HepG2 (cell line): ENCODE measurements at regions of chr2 and their contacts with region 1.

Region 1: GRCh38 chr2:43648994-43649701 is 12.1 kb downstream of the PLEKHH2 start:
- DNase-seq: no peak
- ATAC-seq: no peak
- H3K4me3 ChIP-seq: no peak overlapping the region
- H3K27ac ChIP-seq: no peak overlapping the region
- H3K4me1 ChIP-seq: no peaks in the 10 kb centered on the region
- H3K27me3 ChIP-seq: no peaks in the 10 kb centered on the region
- CTCF ChIP-seq: no peak
- EP300 ChIP-seq: no peak
- POLR2A ChIP-seq: no peak
- RAD21 ChIP-seq: no peak

Region 2: DNA sequence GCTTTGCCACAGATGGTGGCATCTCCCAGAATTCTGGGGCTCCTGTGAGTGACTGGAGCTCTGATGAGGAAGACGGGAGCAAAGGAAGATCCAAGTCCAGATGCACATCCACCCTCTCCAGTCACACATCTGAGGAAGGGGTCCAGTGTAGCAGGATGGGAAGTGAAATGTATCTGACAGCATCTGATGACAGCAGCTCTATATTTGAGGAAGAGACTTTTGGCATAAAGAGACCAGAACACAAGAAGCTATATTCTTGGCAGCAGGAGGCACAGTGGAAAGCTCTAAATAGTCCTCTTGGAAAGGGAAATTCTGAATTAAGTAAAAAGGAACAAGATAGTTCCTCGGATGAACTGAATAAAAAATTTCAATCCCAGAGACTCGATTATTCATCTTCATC is 50.6 kb after region 1 on chr2:
- CTCF ChIA-PET with region 1: no interaction called
- POLR2A ChIA-PET with region 1: no interaction called
- in situ Hi-C with region 1: no loop called
- intact Hi-C with region 1: loop called (anchors 2 kb)
- DNase-seq: no peak
- ATAC-seq: no peak
- H3K4me3 ChIP-seq: no peak overlapping the region
- H3K27ac ChIP-seq: no peak overlapping the region
- H3K4me1 ChIP-seq: peaks cover 7% of the 10 kb centered on the region
- H3K27me3 ChIP-seq: no peaks in the 10 kb centered on the region
- CTCF ChIP-seq: no peak
- EP300 ChIP-seq: no peak
- POLR2A ChIP-seq: no peak
- RAD21 ChIP-seq: no peak